Heart right ventricle (tissue), 16 donors: ENCODE measurements at regions of chr20 and their contacts with region 1.

Region 1: GRCh38 chr20:32155017-32155981 is 45.8 kb downstream of the TM9SF4 start:
- DNase-seq: peak; percentile 79 to 84
- ATAC-seq: peak; percentile 90 to 96 (median 93)
- H3K4me3 ChIP-seq: no peak overlapping the region
- H3K27ac ChIP-seq: peak overlapping the region in 9 of 10 donors; percentile 28 to 74 (median 60)
- H3K4me1 ChIP-seq: peaks cover 10 to 24% (median 16%) of the 10 kb centered on the region in 9 donors
- H3K27me3 ChIP-seq: no peaks in the 10 kb centered on the region
- CTCF ChIP-seq: peak in 7 of 9 donors; percentile 21 to 60 (median 44)

Region 2: GRCh38 chr20:31890646-31891045 is 264.7 kb before region 1 on chr20:
- intact Hi-C with region 1: no loop called
- DNase-seq: no peak
- ATAC-seq: no peak
- H3K4me3 ChIP-seq: no peak overlapping the region
- H3K27ac ChIP-seq: no peak overlapping the region
- H3K4me1 ChIP-seq: peaks cover 0 to 11% (median 4%) of the 10 kb centered on the region in 9 donors
- H3K27me3 ChIP-seq: peaks cover 0 to 6% (median 0%) of the 10 kb centered on the region in 7 donors
- CTCF ChIP-seq: no peak

Region 3: GRCh38 chr20:32052090-32052777 is 103.1 kb before region 1 on chr20 and contains the start of gene HCK:
- intact Hi-C with region 1: no loop called
- DNase-seq: peak in 1 of 2 donors; percentile 42
- ATAC-seq: peak; percentile 71 to 83 (median 82)
- H3K4me3 ChIP-seq: peak within 1 kb of the TSS in 9 of 10 donors; percentile 9 to 67 (median 44)
- H3K27ac ChIP-seq: peak within 1 kb of the TSS in 8 of 10 donors; percentile 34 to 96 (median 70)
- H3K4me1 ChIP-seq: peaks cover 0 to 47% (median 11%) of the 10 kb centered on the region in 9 donors
- H3K27me3 ChIP-seq: peaks cover 11 to 76% (median 64%) of the 10 kb centered on the region in 7 donors
- CTCF ChIP-seq: no peak
- total RNA-seq, gene HCK: 1.6 to 22.9 (median 3.0) TPM

Region 4: GRCh38 chr20:32189691-32190615 is 34.7 kb after region 1 on chr20:
- intact Hi-C with region 1: loop called in 1 of 10 experiments (anchors 5 kb)
- DNase-seq: peak; percentile 40 to 48
- ATAC-seq: peak; percentile 42 to 73 (median 50)
- H3K4me3 ChIP-seq: peak overlapping the region; percentile 36 to 88 (median 69)
- H3K27ac ChIP-seq: peak overlapping the region; percentile 59 to 88 (median 83)
- H3K4me1 ChIP-seq: peaks cover 0 to 63% (median 32%) of the 10 kb centered on the region in 9 donors
- H3K27me3 ChIP-seq: no peaks in the 10 kb centered on the region
- CTCF ChIP-seq: peak in 1 of 9 donors; percentile 22

Region 5: DNA sequence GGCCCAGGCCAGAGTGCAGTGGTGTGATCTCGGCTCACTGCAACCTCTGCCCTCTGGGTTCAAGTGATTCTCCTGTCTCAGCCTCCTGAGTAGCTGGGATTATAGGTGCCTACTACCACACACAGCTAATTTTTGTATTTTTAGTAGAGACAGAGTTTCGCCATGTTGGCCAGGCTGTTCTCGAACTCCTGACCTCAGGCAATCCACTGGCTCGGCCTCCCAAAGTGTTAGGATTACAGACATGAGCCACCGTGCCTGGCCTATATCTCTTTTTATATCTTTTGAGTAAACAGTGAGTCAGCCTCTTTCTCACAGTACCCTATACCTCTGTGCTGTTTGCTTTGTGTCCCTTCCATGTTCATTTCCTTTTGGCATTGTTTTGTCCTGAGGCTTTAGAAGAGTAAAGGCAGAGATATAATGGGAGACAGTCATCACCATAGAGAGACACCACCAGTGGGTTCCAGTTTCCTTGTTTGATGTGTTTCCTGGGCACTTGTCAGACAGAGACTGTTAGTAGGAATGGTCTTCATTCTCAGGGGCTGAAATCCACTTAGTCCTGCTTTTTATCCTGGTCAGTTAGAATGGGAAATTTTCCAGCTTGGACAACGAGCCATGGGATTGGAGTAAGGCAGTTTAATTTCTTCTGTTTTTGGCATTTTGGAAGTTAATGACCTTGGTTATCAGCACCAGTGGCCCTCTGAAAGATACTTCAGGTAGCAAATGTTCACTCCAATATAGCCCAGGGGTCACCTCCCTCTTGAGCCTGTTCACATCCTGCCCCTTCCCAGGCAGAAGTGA is 170.6 kb after region 1 on chr20:
- intact Hi-C with region 1: no loop called
- DNase-seq: no peak
- ATAC-seq: peak in 4 of 8 donors; percentile 33 to 48 (median 42)
- H3K4me3 ChIP-seq: no peak overlapping the region
- H3K27ac ChIP-seq: no peak overlapping the region
- H3K4me1 ChIP-seq: peaks cover 0 to 12% (median 5%) of the 10 kb centered on the region in 9 donors
- H3K27me3 ChIP-seq: no peaks in the 10 kb centered on the region
- CTCF ChIP-seq: no peak

Region 6: DNA sequence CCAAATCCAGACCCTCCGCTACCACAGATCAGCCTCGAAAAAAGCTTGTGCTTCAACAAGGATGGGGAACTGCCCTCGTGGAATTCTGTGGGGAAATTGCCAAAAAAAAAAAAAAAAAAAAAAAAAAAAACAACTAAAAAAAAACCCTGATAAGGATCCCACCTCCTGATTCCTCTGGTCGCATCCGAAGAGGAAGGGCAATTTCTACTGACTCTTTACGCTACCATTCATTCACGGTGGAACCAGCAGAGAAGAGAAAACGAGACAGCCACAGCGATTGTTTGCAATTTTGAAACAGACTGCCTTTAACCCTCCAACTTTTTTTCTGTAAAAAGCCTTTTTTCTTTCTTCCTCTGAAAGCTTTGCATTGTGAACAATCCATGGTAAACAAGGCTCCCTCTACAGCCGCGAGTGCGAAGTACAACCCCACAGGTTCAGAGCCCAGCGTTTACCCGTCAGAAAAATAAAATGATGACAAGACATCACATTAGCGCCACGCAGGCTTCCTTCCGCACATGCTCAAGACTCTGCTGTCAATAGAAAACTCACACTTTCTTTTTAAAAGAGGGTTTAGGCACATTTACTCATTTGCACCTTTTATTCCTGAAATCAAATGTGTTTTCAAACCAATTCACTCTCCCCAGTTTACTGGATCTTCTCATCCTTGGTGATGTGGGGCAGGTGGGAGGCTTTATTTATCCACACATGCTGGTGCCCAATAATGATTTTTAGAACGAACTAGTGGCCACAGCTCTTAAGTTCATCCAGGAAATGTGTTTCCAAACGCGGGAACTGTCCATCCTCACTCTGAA is 329.9 kb after region 1 on chr20:
- intact Hi-C with region 1: loop called in 1 of 10 experiments (anchors 10 kb)
- DNase-seq: peak; percentile 70 to 78
- ATAC-seq: peak in 7 of 8 donors; percentile 23 to 72 (median 65)
- H3K4me3 ChIP-seq: peak overlapping the region; percentile 48 to 92 (median 76)
- H3K27ac ChIP-seq: peak overlapping the region in 9 of 10 donors; percentile 44 to 91 (median 84)
- H3K4me1 ChIP-seq: peaks cover 4 to 45% (median 37%) of the 10 kb centered on the region in 9 donors
- H3K27me3 ChIP-seq: no peaks in the 10 kb centered on the region
- CTCF ChIP-seq: peak; percentile 62 to 89 (median 78)

Region 7: GRCh38 chr20:32652739-32653526 is 497.6 kb after region 1 on chr20:
- intact Hi-C with region 1: loop called in 1 of 10 experiments (anchors 10 kb)
- DNase-seq: peak; percentile 85 to 87
- ATAC-seq: peak; percentile 93 to 99 (median 97)
- H3K4me3 ChIP-seq: no peak overlapping the region
- H3K27ac ChIP-seq: no peak overlapping the region
- H3K4me1 ChIP-seq: peaks cover 0 to 9% (median 4%) of the 10 kb centered on the region in 9 donors
- H3K27me3 ChIP-seq: no peaks in the 10 kb centered on the region
- CTCF ChIP-seq: peak; percentile 88 to 97 (median 95)